T-cell (primary cell): ENCODE measurements at regions of chr15 and their contacts with region 1.

Region 1: GRCh38 chr15:59656897-59657634 is at the start of gene GTF2A2:
- DNase-seq: peak; percentile 80 to 94 (median 89)
- ATAC-seq: peak; percentile 99
- H3K4me3 ChIP-seq: peak within 1 kb of the TSS; percentile 86
- H3K4me3 Mint-ChIP-seq: peak within 1 kb of the TSS in 1 of 3 donors; percentile 44
- H3K27ac ChIP-seq: peak within 1 kb of the TSS; percentile 76
- H3K27ac Mint-ChIP-seq: peak within 1 kb of the TSS; percentile 60 to 81
- H3K4me1 ChIP-seq: peaks cover 19 to 20% of the 10 kb centered on the region in 2 experiments
- H3K4me1 Mint-ChIP-seq: peaks cover 4 to 15% (median 12%) of the 10 kb centered on the region in 3 donors
- H3K27me3 ChIP-seq: no peaks in the 10 kb centered on the region
- H3K27me3 Mint-ChIP-seq: no peaks in the 10 kb centered on the region
- total RNA-seq, gene GTF2A2: 44.1 to 70.6 (median 53.3) TPM

Region 2: GRCh38 chr15:58933281-58934113 is 723.6 kb before region 1 on chr15 and contains the start of gene SLTM:
- CTCF ChIA-PET with region 1: no interaction called
- POLR2A ChIA-PET with region 1: interaction called in 1 of 2 experiments, 17 read pairs
- DNase-seq: peak; percentile 89 to 98 (median 93)
- ATAC-seq: peak; percentile 93 to 97 (median 96)
- H3K4me3 ChIP-seq: peak within 1 kb of the TSS; percentile 94 to 95
- H3K4me3 Mint-ChIP-seq: peak within 1 kb of the TSS; percentile 91 to 99 (median 97)
- H3K27ac ChIP-seq: peak within 1 kb of the TSS; percentile 99
- H3K27ac Mint-ChIP-seq: peak within 1 kb of the TSS; percentile 100
- H3K4me1 ChIP-seq: peaks cover 12 to 21% of the 10 kb centered on the region in 2 experiments
- H3K4me1 Mint-ChIP-seq: peaks cover 17 to 36% (median 24%) of the 10 kb centered on the region in 3 donors
- H3K27me3 ChIP-seq: no peaks in the 10 kb centered on the region
- H3K27me3 Mint-ChIP-seq: no peaks in the 10 kb centered on the region
- total RNA-seq, gene SLTM: 129 to 172 (median 140) TPM